HEK293 (cell line): ENCODE measurements at regions of chrX and their contacts with region 1.

Region 1: DNA sequence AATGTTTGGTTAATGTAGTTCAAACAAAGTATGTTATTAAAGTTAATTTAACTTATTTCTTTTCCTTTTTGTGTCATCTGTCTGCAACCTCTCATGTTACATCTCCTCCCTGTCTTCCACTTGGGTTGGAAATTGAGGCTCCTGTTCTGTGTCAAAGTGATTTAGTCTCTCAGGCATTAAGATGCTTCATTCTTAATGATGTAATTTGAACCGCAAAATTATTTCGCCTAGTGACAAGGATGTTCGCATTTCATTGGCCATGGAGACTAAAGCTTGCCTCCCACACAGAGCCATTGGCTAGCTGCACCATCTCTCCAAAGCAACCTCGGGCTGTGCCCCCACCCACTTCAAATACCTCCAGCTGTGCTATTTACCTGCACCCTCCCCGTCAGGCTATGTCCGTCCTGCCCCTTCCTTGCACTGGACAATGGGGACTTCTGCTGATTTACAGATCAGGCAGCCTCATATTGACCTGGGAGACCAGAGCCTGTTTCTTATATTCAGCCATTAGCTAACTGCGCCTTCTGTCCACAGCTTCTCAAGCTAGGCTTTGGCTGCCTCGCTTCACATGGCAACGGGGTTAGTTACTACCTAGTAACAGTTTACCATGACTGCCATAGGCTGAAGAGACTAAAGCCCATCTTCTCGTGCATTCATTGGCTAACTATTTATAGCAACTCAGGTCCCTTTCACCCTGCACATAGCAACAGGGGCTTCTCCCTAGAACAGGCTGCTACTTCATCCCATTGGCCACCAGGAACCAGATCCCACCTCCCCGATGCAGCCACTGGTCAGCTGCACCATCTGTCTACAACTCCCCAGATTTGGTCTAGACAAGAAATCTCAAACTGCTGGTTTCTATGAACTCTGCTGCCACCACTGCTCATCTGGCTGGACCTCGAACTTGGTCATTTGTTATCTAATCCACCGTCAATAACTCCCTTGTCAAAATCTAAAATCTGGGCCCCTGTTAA is 8.6 kb upstream of the ZNF157 start:
- H3K4me3 ChIP-seq: peak overlapping the region; percentile 36
- H3K27ac ChIP-seq: peak overlapping the region; percentile 81
- H3K4me1 ChIP-seq: peaks cover 2% of the 10 kb centered on the region; the same call in 1 of the 2 replicates
- CTCF ChIP-seq: no peak

Region 2: DNA sequence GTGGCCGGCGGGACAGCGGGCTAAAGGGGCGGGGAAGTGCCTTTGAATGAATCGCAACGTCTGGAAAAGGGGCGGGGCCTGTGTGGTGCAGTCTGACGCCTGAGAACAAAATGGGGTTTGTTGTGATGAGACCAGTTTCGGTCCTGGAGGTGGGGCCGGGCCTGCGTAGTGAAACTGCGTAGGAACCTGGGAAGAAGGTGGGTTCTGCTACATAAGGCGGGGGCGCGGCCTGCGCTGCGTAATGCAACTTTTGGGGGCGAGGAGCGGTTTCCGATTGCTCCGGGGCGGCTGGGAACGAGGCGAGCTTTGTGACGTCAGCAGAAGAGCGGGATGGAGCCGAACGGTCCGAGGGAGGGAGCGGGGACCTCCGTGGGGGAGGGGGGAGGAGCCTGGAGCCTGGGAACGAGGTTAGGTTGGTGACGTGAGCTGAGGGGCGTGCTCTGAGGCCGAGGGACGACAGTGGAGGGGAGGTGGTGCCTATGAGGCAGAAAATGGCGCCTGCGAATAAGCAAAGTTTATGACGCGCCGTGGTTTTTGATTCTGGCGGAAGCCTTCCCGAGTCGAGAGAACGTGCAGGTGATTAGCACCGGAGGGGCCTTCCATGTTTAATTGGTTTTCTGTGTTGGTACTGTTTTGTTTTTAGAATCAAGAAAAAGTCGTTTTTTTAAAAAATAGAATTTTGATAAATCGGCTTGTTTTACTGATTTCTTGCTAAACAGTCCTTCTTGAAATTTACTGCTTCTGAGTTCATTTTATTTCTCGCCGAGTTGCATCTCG is 128.3 kb before region 1 on chrX:
- CTCF ChIA-PET with region 1: no interaction called
- POLR2A ChIA-PET with region 1: interaction called, 12 read pairs
- H3K4me3 ChIP-seq: peak overlapping the region; percentile 87
- H3K27ac ChIP-seq: peak overlapping the region; percentile 100
- H3K4me1 ChIP-seq: peaks cover 7% of the 10 kb centered on the region; the same call in 1 of the 2 replicates
- CTCF ChIP-seq: no peak